GM12878 (cell line): ENCODE measurements at regions of chr18 and their contacts with region 1.

Region 1: DNA sequence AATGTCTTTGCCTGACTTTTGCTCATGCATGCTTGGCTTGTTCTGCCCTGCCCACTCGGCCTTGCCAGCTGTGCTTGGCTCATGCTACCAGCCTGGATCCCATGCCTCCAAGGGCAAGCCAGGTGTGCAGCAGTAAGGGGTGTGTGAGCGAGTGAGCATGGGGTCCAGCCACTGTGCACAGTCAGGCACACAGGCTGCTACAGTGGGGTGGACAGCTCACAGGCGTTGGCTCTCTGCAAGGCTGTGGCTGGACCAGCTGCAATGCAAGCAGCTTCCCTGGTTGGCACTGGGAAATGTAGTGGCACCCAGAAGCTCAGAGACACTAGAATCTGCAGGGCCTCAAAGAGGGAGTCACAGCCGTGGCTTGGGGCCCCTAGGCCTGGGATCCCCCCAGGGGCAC is 529.7 kb downstream of the DSC3 start:
- DNase-seq: no peak
- ATAC-seq: no peak
- H3K4me3 ChIP-seq: no peak overlapping the region
- H3K27ac ChIP-seq: no peak overlapping the region
- H3K4me1 ChIP-seq: no peaks in the 10 kb centered on the region
- H3K27me3 ChIP-seq: no peaks in the 10 kb centered on the region
- CTCF ChIP-seq: no peak
- EP300 ChIP-seq: no peak
- POLR2A ChIP-seq: no peak
- RAD21 ChIP-seq: no peak

Region 2: GRCh38 chr18:30527226-30527625 is 14.4 kb after region 1 on chr18:
- CTCF ChIA-PET with region 1: interaction called, 4 read pairs
- POLR2A ChIA-PET with region 1: interaction called, 3 read pairs
- RAD21 ChIA-PET with region 1: interaction called, 10 read pairs
- SMC1A ChIA-PET with region 1: interaction called, 12 read pairs
- in situ Hi-C with region 1: no loop called
- intact Hi-C with region 1: no loop called
- DNase-seq: no peak
- ATAC-seq: no peak
- H3K4me3 ChIP-seq: no peak overlapping the region
- H3K27ac ChIP-seq: no peak overlapping the region
- H3K4me1 ChIP-seq: no peaks in the 10 kb centered on the region
- H3K27me3 ChIP-seq: no peaks in the 10 kb centered on the region
- CTCF ChIP-seq: no peak
- EP300 ChIP-seq: no peak
- POLR2A ChIP-seq: no peak
- RAD21 ChIP-seq: no peak